HAP-1 (cell line): ENCODE measurements at regions of chr18 and their contacts with region 1.

Region 1: GRCh38 chr18:6994771-6995435 is 122.7 kb downstream of the LAMA1 start:
- DNase-seq: no peak
- H3K4me3 ChIP-seq: no peak overlapping the region
- H3K4me1 ChIP-seq: no peaks in the 10 kb centered on the region
- H3K27me3 ChIP-seq: no peaks in the 10 kb centered on the region

Region 2: GRCh38 chr18:6687676-6688075 is 307.2 kb before region 1 on chr18:
- in situ Hi-C with region 1: no loop called
- DNase-seq: no peak
- H3K4me3 ChIP-seq: no peak overlapping the region
- H3K4me1 ChIP-seq: no peaks in the 10 kb centered on the region
- H3K27me3 ChIP-seq: no peaks in the 10 kb centered on the region

Region 3: DNA sequence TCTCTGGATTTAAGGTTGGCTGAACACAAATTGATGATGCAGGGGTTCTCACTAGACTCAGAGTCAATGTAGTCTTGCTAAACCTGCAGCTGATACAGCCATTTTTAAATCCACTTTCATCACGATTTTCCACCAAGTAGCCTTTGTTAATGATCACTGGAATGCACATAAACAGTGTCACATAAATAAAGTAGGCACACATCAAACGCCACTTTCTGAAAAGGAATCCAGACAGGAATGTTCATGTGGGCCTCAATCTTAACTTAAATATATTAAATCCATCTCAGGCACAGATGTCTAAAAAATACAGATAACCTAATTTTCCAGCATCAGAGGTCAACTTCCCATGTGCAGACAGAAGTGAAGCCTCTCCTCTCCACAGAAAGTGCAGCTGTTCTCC is 64.4 kb after region 1 on chr18:
- in situ Hi-C with region 1: no loop called
- DNase-seq: no peak
- H3K4me3 ChIP-seq: no peak overlapping the region
- H3K4me1 ChIP-seq: no peaks in the 10 kb centered on the region
- H3K27me3 ChIP-seq: no peaks in the 10 kb centered on the region

Region 4: GRCh38 chr18:7084080-7085075 is 89.5 kb after region 1 on chr18:
- in situ Hi-C with region 1: loop called (anchors 25 kb)
- DNase-seq: no peak
- H3K4me3 ChIP-seq: no peak overlapping the region
- H3K4me1 ChIP-seq: no peaks in the 10 kb centered on the region
- H3K27me3 ChIP-seq: no peaks in the 10 kb centered on the region

Region 5: DNA sequence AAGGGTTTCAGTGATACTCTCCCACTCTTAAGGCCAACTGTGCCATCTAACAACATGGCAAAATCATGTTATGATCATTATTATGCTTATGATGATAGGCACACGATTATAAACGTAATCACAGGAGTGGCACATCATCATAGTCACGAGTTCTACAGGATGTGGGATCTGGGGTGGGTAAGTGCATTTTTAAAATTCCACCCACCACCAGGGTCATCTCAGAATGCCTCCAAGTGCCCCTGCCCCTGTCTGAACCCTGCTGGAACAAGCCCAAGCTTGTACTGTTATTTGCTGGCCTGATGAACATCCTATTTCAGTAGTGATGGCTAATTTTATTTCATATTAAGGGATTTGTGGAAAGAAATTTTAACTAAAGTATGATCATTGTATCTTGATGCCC is 690.1 kb after region 1 on chr18:
- in situ Hi-C with region 1: no loop called
- DNase-seq: no peak
- H3K4me3 ChIP-seq: no peak overlapping the region
- H3K4me1 ChIP-seq: no peaks in the 10 kb centered on the region
- H3K27me3 ChIP-seq: no peaks in the 10 kb centered on the region